ENCODE measurements at regions of chr12 and their contacts with region 1.

Region 1: GRCh38 chr12:30847259-30847658 is 79.3 kb upstream of the TSPAN11 start:
- DNase-seq: no peak
- H3K4me3 ChIP-seq: no peak overlapping the region
- H3K27ac ChIP-seq: no peak overlapping the region
- H3K4me1 ChIP-seq: no peaks in the 10 kb centered on the region
- H3K27me3 ChIP-seq: no peaks in the 10 kb centered on the region
- CTCF ChIP-seq: peak; percentile 34 to 71 (median 58)
- POLR2A ChIP-seq: no peak

Region 2: DNA sequence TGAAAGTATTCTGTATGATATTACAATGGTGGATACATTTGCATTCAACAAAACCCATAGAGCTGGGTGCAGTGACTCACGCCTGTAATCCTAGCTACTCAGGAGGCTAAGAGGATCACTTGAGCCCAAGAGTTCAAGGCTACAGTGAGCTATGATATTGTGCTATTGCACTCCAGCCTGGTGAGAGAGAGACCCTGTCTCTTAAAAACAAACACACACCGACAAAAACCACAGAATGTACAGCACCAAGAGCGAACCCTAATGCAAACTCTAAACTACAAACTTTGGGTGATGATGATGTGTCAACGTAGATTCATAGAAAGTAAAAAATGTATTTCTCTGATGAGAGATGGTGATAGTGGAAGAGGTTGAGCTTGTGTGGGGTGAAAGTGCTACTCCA is 101.1 kb before region 1 on chr12:
- intact Hi-C with region 1: no loop called
- DNase-seq: no peak
- H3K4me3 ChIP-seq: no peak overlapping the region
- H3K27ac ChIP-seq: no peak overlapping the region
- H3K4me1 ChIP-seq: no peaks in the 10 kb centered on the region
- H3K27me3 ChIP-seq: no peaks in the 10 kb centered on the region
- CTCF ChIP-seq: no peak
- POLR2A ChIP-seq: no peak

Region 3: GRCh38 chr12:30989754-30990153 is 142.5 kb after region 1 on chr12:
- intact Hi-C with region 1: loop called (anchors 10 kb)
- DNase-seq: peak; percentile 50
- H3K4me3 ChIP-seq: no peak overlapping the region
- H3K27ac ChIP-seq: no peak overlapping the region
- H3K4me1 ChIP-seq: no peaks in the 10 kb centered on the region
- H3K27me3 ChIP-seq: no peaks in the 10 kb centered on the region
- CTCF ChIP-seq: no peak
- POLR2A ChIP-seq: no peak